Lower leg skin (tissue), 4 donors: ENCODE measurements at regions of chrX and their contacts with region 1.

Region 1: GRCh38 chrX:119474615-119475388 is 6.6 kb downstream of the SLC25A5 start:
- DNase-seq: no peak
- H3K4me3 ChIP-seq: no peak overlapping the region
- CTCF ChIP-seq: no peak
- POLR2A ChIP-seq: no peak

Region 2: GRCh38 chrX:119604766-119605463 is 130.1 kb after region 1 on chrX:
- intact Hi-C with region 1: loop called (anchors 5 kb)
- DNase-seq: no peak
- H3K4me3 ChIP-seq: peak overlapping the region; percentile 59
- CTCF ChIP-seq: no peak
- POLR2A ChIP-seq: no peak